ENCODE measurements at regions of chr7 and their contacts with region 1.

Region 1: GRCh38 chr7:79673969-79674368 is 220.5 kb upstream of the MAGI2 start:
- DNase-seq: no peak
- H3K4me3 Mint-ChIP-seq: no peak overlapping the region
- H3K27ac Mint-ChIP-seq: no peak overlapping the region
- H3K4me1 Mint-ChIP-seq: no peaks in the 10 kb centered on the region
- H3K27me3 Mint-ChIP-seq: no peaks in the 10 kb centered on the region

Region 2: GRCh38 chr7:79734158-79734557 is 60.2 kb after region 1 on chr7:
- intact Hi-C with region 1: loop called (anchors 10 kb)
- DNase-seq: no peak
- H3K4me3 Mint-ChIP-seq: no peak overlapping the region
- H3K27ac Mint-ChIP-seq: no peak overlapping the region
- H3K4me1 Mint-ChIP-seq: no peaks in the 10 kb centered on the region
- H3K27me3 Mint-ChIP-seq: no peaks in the 10 kb centered on the region

Region 3: GRCh38 chr7:79749856-79750255 is 75.9 kb after region 1 on chr7:
- intact Hi-C with region 1: no loop called
- DNase-seq: no peak
- H3K4me3 Mint-ChIP-seq: no peak overlapping the region
- H3K27ac Mint-ChIP-seq: no peak overlapping the region
- H3K4me1 Mint-ChIP-seq: no peaks in the 10 kb centered on the region
- H3K27me3 Mint-ChIP-seq: no peaks in the 10 kb centered on the region

Region 4: DNA sequence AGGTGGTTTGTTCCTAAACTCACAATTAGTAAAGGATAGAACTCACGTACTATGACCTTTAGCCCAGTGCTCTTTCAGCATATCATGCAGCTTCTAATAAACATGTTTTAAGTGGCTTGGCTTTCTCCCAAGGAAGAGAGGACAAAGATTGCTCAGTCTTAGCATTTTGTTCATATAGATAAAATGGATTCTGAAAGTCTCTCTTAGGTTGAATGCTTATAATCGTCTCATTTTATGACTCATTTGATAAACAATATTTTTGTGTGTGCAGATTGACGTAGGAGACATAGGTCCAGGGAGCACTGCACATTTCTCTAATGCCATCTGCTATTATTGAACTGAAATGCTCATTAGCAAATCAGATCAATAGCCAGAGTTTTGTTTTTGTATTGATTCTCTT is 793.1 kb after region 1 on chr7:
- intact Hi-C with region 1: no loop called
- DNase-seq: no peak
- H3K4me3 Mint-ChIP-seq: no peak overlapping the region
- H3K27ac Mint-ChIP-seq: no peak overlapping the region
- H3K4me1 Mint-ChIP-seq: no peaks in the 10 kb centered on the region
- H3K27me3 Mint-ChIP-seq: no peaks in the 10 kb centered on the region